WTC11 (cell line): ENCODE measurements at regions of chr17 and their contacts with region 1.

Region 1: DNA sequence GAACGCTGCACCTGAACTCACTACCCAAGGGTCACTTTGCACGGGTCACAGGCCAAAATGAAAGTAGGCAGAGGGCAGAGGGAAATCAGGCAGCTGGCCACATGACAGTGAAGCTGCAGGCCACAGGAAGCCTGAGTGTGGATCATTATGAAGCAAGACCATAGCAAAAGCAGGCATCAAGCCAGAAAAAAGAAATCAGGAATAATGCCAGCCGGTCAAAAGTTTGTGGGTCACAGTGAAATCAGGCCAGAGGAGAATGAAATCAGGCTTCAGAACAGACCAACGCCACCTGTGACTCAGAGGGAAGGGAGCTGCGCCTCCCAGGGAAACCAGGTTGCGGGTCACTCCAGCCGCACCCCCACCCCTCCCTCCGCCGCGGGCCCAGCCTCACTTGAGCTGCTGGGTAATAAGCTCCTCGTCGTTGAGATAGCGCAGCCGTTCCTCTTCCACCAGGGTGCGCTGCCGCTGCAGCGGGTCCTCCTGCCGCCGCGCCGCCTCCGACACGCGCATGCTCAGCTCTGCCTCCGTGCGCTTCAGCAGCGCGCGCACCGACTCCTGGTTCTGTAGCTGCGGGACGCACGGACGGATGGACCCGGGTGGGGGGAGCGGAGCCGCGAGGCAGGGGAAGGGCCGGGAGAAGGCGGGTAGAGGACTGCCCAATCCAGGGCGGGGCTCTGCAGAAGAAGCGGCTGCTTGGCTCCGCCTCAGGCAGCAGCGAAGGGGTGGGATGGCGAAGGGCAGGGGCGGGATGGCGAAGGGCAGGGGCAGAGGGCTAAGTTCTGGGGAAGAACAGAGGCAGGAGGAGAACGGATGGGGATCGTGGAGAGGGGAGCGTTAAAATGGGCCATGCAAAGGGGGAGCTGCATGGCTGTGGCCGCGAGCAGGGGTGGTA is 47.7 kb downstream of the SRCIN1 start:
- DNase-seq: peak; percentile 96
- ATAC-seq: peak; percentile 72
- H3K4me3 Mint-ChIP-seq: peak overlapping the region; percentile 90
- H3K27ac Mint-ChIP-seq: no peak overlapping the region; the same call in 1 of the 2 replicates
- H3K4me1 Mint-ChIP-seq: peaks cover 37% of the 10 kb centered on the region
- H3K27me3 Mint-ChIP-seq: peaks cover 58% of the 10 kb centered on the region
- CTCF ChIP-seq: peak; percentile 57; the same call in 1 of the 2 replicates

Region 2: GRCh38 chr17:38351412-38352222 is 206.5 kb before region 1 on chr17 and contains the start of gene SOCS7:
- CTCF ChIA-PET with region 1: interaction called, 15 read pairs
- POLR2A ChIA-PET with region 1: no interaction called
- DNase-seq: peak; percentile 90
- ATAC-seq: peak; percentile 81
- H3K4me3 Mint-ChIP-seq: peak within 1 kb of the TSS; percentile 79
- H3K27ac Mint-ChIP-seq: peak within 1 kb of the TSS; percentile 98
- H3K4me1 Mint-ChIP-seq: peaks cover 48% of the 10 kb centered on the region
- H3K27me3 Mint-ChIP-seq: no peaks in the 10 kb centered on the region; the same call in 1 of the 2 replicates
- CTCF ChIP-seq: no peak
- total RNA-seq, gene SOCS7: 32.3 to 34.4 TPM (median 33.6 TPM) in 3 replicates

Region 3: GRCh38 chr17:38509008-38509771 is 48.9 kb before region 1 on chr17:
- CTCF ChIA-PET with region 1: interaction called, 61 read pairs
- POLR2A ChIA-PET with region 1: interaction called, 10 read pairs
- DNase-seq: peak; percentile 97
- ATAC-seq: peak; percentile 69
- H3K4me3 Mint-ChIP-seq: peak overlapping the region; percentile 79
- H3K27ac Mint-ChIP-seq: no peak overlapping the region
- H3K4me1 Mint-ChIP-seq: peaks cover 33% of the 10 kb centered on the region
- H3K27me3 Mint-ChIP-seq: peaks cover 33% of the 10 kb centered on the region
- CTCF ChIP-seq: peak; percentile 93

Region 4: GRCh38 chr17:38591759-38592241 is 33.7 kb after region 1 on chr17:
- CTCF ChIA-PET with region 1: interaction called, 354 read pairs
- POLR2A ChIA-PET with region 1: interaction called, 3 read pairs
- DNase-seq: no peak
- ATAC-seq: no peak
- H3K4me3 Mint-ChIP-seq: no peak overlapping the region
- H3K27ac Mint-ChIP-seq: no peak overlapping the region
- H3K4me1 Mint-ChIP-seq: peaks cover 69% of the 10 kb centered on the region
- H3K27me3 Mint-ChIP-seq: peaks cover 8% of the 10 kb centered on the region
- CTCF ChIP-seq: no peak

Region 5: DNA sequence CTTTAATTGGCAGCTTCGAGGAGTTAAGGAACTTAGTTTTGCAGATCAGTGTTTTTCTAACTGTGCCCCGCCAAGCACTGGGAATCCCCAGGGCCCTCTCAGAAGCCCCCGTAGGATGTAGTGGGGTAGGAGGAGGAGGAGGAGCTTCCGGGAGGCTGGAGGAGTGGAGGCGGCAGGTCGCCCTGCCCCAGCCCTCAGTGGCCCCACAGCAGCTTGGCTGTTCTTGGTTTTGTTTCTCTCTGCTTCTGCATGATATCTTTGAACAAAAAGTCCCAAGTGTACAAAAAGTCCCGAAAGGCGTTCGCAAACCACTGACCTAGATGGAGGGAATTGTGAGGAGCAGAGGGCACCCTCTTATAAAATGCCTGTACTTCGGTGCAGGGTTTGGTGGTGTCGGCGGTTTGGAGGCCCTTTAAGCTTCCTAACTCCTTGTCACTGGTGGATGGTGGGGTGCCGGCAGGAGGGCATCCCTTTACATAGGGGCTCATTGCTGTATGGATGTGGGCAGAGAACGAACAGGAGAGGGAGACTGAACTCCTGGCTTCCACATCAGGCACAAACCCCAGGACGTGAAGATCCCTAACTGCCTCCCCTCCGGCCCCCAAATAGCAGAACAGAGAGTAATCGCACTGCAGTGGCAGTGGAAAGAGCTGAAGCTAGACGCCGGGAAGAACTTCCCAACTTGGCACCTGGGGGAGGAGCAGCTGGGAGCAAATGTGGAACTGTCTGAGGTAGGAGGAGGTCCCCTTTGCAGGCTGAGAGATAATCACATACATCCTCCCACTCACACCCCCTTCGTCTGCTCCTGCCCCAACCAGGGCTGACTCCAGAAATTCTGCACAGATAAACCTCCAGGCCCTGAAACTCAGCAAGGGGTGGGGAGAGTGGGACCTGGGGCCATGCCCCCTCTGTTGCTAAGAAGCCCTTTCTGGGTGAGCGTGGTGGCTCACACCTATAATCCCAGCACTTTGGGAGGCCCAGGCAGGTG is 96.6 kb after region 1 on chr17:
- CTCF ChIA-PET with region 1: interaction called, 14 read pairs
- POLR2A ChIA-PET with region 1: no interaction called
- DNase-seq: peak; percentile 10
- ATAC-seq: peak; percentile 65
- H3K4me3 Mint-ChIP-seq: no peak overlapping the region
- H3K27ac Mint-ChIP-seq: no peak overlapping the region
- H3K4me1 Mint-ChIP-seq: peaks cover 30% of the 10 kb centered on the region
- H3K27me3 Mint-ChIP-seq: peaks cover 25% of the 10 kb centered on the region
- CTCF ChIP-seq: no peak

Region 6: DNA sequence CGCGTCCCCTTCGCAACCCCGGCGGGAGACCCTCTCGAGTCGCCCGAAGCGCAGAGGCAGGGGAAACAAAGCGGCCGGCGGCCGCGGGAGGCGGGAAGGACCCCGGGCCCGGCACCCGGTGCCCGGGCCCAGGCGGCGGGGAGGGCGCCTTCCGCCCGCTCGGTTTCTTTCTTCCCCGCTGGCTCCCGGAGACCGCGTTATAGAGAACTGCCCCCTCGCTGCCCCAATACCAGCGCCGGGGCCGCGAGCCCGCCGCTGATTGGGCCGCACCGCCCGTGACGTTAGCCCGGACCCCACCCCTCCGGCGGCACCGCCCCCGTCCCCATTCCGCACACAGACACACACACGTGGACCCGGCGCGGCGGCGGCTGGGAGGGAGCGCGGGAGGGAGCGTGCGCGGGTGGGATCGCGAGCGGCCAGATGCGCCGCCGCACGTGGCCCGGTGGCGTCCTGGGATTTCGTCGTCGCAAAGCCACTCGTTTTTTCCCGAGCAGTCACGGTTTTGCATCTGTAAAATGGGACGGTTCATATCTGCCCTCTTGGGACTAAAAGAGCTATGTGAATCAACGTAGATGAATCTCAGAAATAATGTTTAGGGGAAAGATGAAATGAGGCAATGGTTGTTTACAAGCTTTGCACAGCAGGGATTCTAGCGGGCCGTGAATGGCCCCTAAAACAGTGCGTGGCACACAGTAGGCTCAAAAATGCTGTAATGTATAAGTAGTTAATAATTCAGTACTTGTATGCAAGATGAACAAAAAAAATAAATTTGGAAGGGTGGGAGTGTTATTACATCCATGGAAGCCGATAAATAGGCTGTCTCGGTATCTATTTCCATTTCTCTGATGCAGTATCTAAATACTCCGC is 116.9 kb after region 1 on chr17 and contains the start of gene EPOP:
- CTCF ChIA-PET with region 1: interaction called, 501 read pairs
- POLR2A ChIA-PET with region 1: no interaction called
- DNase-seq: peak; percentile 89
- ATAC-seq: peak; percentile 62
- H3K4me3 Mint-ChIP-seq: peak within 1 kb of the TSS; percentile 54
- H3K27ac Mint-ChIP-seq: no peak within 1 kb of the TSS
- H3K4me1 Mint-ChIP-seq: peaks cover 35% of the 10 kb centered on the region
- H3K27me3 Mint-ChIP-seq: peaks cover 77% of the 10 kb centered on the region
- CTCF ChIP-seq: no peak
- total RNA-seq, gene EPOP: 8.7 to 12.3 TPM (median 9.0 TPM) in 3 replicates

Region 7: DNA sequence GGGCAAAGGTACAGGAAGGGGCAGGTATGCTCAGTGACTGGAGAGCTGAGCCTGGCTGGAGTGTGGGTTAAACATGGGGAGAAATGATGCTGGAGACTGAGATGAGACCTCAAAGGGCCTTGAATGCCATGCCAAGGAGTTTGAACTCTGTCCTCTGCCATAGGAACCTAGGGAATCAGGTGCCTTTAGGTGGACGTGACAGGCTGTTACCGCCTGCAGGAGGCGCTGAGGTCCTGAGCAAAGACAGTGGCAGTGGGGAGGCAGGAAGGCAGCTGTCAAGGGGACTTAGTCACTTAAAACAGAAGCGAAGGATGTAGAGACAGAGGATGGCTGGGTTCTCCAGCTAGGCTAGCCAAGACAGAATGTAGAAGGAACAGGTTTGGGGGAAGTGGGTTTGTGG is 203.5 kb after region 1 on chr17:
- CTCF ChIA-PET with region 1: no interaction called
- POLR2A ChIA-PET with region 1: no interaction called
- DNase-seq: peak; percentile 73
- ATAC-seq: peak; percentile 93
- H3K4me3 Mint-ChIP-seq: no peak overlapping the region
- H3K27ac Mint-ChIP-seq: no peak overlapping the region
- H3K4me1 Mint-ChIP-seq: no peaks in the 10 kb centered on the region
- H3K27me3 Mint-ChIP-seq: no peaks in the 10 kb centered on the region
- CTCF ChIP-seq: peak; percentile 44